ENCODE measurements at regions of chr22 and their contacts with region 1.

Region 1: GRCh38 chr22:41091132-41092022 is 1.0 kb upstream of the EP300 start:
- DNase-seq: peak; percentile 100
- ATAC-seq: peak; percentile 90
- H3K4me3 Mint-ChIP-seq: peak overlapping the region; percentile 97
- H3K27ac Mint-ChIP-seq: peak overlapping the region; percentile 99
- H3K4me1 Mint-ChIP-seq: peaks cover 25% of the 10 kb centered on the region
- H3K27me3 Mint-ChIP-seq: no peaks in the 10 kb centered on the region

Region 2: GRCh38 chr22:40636380-40637182 is 454.8 kb before region 1 on chr22 and contains the start of gene MRTFA:
- CTCF ChIA-PET with region 1: no interaction called
- POLR2A ChIA-PET with region 1: no interaction called
- intact Hi-C with region 1: loop called in 1 of 2 experiments (anchors 1 kb)
- DNase-seq: peak; percentile 100
- ATAC-seq: peak; percentile 96
- H3K4me3 Mint-ChIP-seq: peak within 1 kb of the TSS; percentile 85
- H3K27ac Mint-ChIP-seq: peak within 1 kb of the TSS; percentile 93
- H3K4me1 Mint-ChIP-seq: peaks cover 43% of the 10 kb centered on the region
- H3K27me3 Mint-ChIP-seq: no peaks in the 10 kb centered on the region
- total RNA-seq, gene MRTFA: 41.0 to 43.2 TPM

Region 3: GRCh38 chr22:40922484-40923303 is 168.7 kb before region 1 on chr22:
- CTCF ChIA-PET with region 1: interaction called, 15 read pairs
- POLR2A ChIA-PET with region 1: no interaction called
- intact Hi-C with region 1: loop called in 1 of 2 experiments (anchors 1 kb)
- DNase-seq: no peak
- ATAC-seq: peak; percentile 86
- H3K4me3 Mint-ChIP-seq: peak overlapping the region; percentile 29
- H3K27ac Mint-ChIP-seq: no peak overlapping the region
- H3K4me1 Mint-ChIP-seq: peaks cover 4% of the 10 kb centered on the region
- H3K27me3 Mint-ChIP-seq: no peaks in the 10 kb centered on the region

Region 4: GRCh38 chr22:41177040-41177621 is 85.8 kb after region 1 on chr22:
- CTCF ChIA-PET with region 1: no interaction called
- POLR2A ChIA-PET with region 1: no interaction called
- intact Hi-C with region 1: no loop called
- DNase-seq: no peak
- ATAC-seq: no peak
- H3K4me3 Mint-ChIP-seq: no peak overlapping the region
- H3K27ac Mint-ChIP-seq: no peak overlapping the region
- H3K4me1 Mint-ChIP-seq: no peaks in the 10 kb centered on the region
- H3K27me3 Mint-ChIP-seq: no peaks in the 10 kb centered on the region

Region 5: DNA sequence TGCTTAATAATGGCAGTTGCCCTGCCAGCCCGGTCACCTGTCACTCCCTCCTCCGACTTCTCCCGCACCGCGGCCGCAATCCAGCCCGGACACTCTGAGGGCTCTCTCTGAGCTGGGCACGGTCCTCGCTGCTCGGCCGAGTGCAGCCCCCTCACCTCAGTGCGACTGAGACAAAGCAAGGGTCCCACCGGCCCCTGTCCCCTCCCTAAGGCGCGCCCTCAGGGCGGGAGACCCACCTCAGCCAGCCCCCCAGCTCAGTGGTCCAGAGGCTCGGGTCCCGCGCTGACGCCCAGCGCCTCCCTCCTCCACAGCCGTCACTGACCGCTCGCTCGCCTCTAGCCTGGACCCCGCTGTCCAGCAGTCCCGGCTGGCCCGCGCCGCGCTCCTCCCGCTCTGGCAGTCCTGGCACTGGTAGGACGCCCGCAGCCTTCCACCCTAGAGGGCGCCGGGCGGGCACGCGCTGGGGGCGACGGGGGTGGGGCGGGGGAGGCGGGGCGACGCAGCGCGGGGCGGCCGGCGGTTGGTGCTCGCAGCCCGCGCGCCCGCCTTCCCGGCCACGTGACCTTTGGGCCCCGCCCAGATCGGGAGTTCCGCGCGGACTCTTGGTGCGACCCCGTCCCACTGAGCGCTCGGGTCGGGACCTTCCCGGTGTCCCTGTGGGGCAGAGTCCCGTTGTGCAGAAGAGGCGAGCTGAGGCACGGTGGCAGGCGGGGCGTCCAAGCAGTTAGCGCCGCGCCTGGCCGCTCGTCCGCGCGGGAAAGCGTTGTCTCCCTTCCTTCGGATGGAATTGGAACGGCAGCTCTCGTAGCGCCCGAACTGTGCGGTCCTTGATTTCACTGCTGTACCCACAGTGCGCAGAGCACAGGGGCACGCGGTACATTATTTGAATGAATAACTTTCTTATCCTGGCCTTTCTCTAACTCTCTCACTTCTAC is 105.9 kb after region 1 on chr22:
- CTCF ChIA-PET with region 1: no interaction called
- POLR2A ChIA-PET with region 1: no interaction called
- intact Hi-C with region 1: loop called in 1 of 2 experiments (anchors 1 kb)
- DNase-seq: peak; percentile 89
- ATAC-seq: peak; percentile 82
- H3K4me3 Mint-ChIP-seq: peak overlapping the region; percentile 77
- H3K27ac Mint-ChIP-seq: no peak overlapping the region
- H3K4me1 Mint-ChIP-seq: peaks cover 11% of the 10 kb centered on the region
- H3K27me3 Mint-ChIP-seq: no peaks in the 10 kb centered on the region

Region 6: GRCh38 chr22:41301105-41302020 is 210.0 kb after region 1 on chr22 and contains the start of gene ZC3H7B:
- CTCF ChIA-PET with region 1: interaction called, 3 read pairs
- POLR2A ChIA-PET with region 1: no interaction called
- intact Hi-C with region 1: loop called in 1 of 2 experiments (anchors 1 kb)
- DNase-seq: peak; percentile 92
- ATAC-seq: peak; percentile 96
- H3K4me3 Mint-ChIP-seq: peak within 1 kb of the TSS; percentile 74
- H3K27ac Mint-ChIP-seq: peak within 1 kb of the TSS; percentile 76
- H3K4me1 Mint-ChIP-seq: peaks cover 31% of the 10 kb centered on the region
- H3K27me3 Mint-ChIP-seq: no peaks in the 10 kb centered on the region
- total RNA-seq, gene ZC3H7B: 41.7 to 43.4 TPM

Region 7: DNA sequence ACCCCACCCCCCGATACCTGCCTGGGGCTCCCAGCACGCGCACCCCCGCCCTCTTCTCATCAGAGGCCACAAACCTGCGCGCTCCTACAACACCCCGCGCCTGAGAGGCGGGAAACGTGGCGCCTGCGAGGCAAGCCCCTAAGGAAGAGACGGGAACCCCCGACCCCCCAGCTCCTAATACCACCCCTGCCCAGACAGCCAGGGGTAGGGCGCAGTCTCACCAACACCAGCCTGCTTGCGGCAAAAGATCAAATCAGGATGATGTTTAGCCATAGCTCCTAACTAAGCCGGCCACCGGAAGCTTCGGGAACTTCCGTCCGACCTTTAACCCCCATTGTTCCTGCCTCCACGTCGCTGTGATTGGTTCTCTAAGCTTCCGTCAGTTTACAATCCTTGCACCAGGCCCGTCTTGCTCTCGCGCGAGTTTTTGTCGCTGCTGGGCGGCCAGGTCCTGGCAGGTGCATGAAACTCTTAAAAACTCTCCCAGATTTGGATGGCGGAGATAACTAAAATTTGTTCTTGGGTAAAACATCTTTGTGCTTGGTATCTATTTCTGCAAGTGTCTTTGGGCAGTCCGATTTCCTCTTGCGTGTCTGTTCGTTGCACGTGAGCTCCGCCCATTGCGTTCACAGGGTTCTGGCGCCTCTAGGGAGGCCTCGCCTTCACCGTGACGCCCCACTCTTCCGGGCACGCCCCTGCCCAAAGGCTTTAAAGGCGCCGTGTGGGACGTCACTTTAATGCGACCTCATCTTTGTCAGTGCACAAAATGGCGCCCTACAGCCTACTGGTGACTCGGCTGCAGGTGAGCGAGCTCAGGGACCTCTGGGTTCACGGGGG is 377.2 kb after region 1 on chr22 and contains the starts of genes ACO2 and PHF5A:
- CTCF ChIA-PET with region 1: no interaction called
- POLR2A ChIA-PET with region 1: no interaction called
- intact Hi-C with region 1: loop called in 1 of 2 experiments (anchors 1 kb)
- DNase-seq: peak; percentile 98
- ATAC-seq: peak; percentile 94
- H3K4me3 Mint-ChIP-seq: peak within 1 kb of the TSS; percentile 90
- H3K27ac Mint-ChIP-seq: peak within 1 kb of the TSS; percentile 99
- H3K4me1 Mint-ChIP-seq: peaks cover 47% of the 10 kb centered on the region
- H3K27me3 Mint-ChIP-seq: no peaks in the 10 kb centered on the region
- total RNA-seq, gene ACO2: 95.4 to 106 TPM
- total RNA-seq, gene PHF5A: 54.5 to 61.1 TPM

Region 8: GRCh38 chr22:41621099-41621910 is 529.9 kb after region 1 on chr22 and contains the start of gene XRCC6:
- CTCF ChIA-PET with region 1: interaction called, 4 read pairs
- POLR2A ChIA-PET with region 1: no interaction called
- intact Hi-C with region 1: loop called in 1 of 2 experiments (anchors 2 kb)
- DNase-seq: peak; percentile 100
- ATAC-seq: peak; percentile 91
- H3K4me3 Mint-ChIP-seq: peak within 1 kb of the TSS; percentile 98
- H3K27ac Mint-ChIP-seq: peak within 1 kb of the TSS; percentile 99
- H3K4me1 Mint-ChIP-seq: peaks cover 48% of the 10 kb centered on the region
- H3K27me3 Mint-ChIP-seq: no peaks in the 10 kb centered on the region
- total RNA-seq, gene XRCC6: 427 to 469 TPM